WTC11 (cell line): ENCODE measurements at regions of chr6 and their contacts with region 1.

Region 1: DNA sequence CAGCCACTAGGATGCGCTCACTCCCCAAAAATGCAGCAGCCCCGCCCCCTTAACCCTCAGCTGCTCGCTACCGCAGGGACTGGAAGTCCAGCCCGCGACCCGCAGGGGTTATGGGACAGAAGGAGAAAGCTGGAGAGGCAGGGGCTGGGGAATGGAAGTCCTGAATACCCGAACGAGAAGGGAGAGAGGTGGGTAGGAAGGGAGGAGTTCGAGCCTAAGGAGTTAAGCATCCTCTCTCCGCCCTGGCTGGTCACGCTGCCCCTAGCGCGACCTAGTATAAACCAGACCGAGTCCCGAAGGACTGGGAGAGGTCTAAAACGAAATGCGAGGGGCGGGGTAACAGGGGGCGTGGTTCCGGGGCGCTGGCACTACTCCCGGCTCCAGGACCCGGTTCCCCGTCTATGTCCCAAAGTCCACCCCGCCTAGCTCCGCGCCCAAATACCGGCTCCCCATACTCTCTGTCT is 448 bp upstream of the DDAH2 start:
- DNase-seq: peak; percentile 95
- ATAC-seq: peak; percentile 78
- H3K4me3 Mint-ChIP-seq: peak overlapping the region; percentile 93
- H3K27ac Mint-ChIP-seq: peak overlapping the region; percentile 99
- H3K4me1 Mint-ChIP-seq: peaks cover 21% of the 10 kb centered on the region
- H3K27me3 Mint-ChIP-seq: no peaks in the 10 kb centered on the region
- CTCF ChIP-seq: no peak; the same call in 1 of the 2 replicates

Region 2: GRCh38 chr6:31660381-31661261 is 68.9 kb before region 1 on chr6 and contains the start of gene C6orf47:
- CTCF ChIA-PET with region 1: interaction called, 12 read pairs
- POLR2A ChIA-PET with region 1: interaction called, 4 read pairs
- DNase-seq: peak; percentile 89
- ATAC-seq: peak; percentile 83
- H3K4me3 Mint-ChIP-seq: peak within 1 kb of the TSS; percentile 89
- H3K27ac Mint-ChIP-seq: peak within 1 kb of the TSS; percentile 91
- H3K4me1 Mint-ChIP-seq: peaks cover 38% of the 10 kb centered on the region
- H3K27me3 Mint-ChIP-seq: no peaks in the 10 kb centered on the region
- CTCF ChIP-seq: no peak
- total RNA-seq, gene C6orf47: 14.0 to 16.3 TPM (median 14.3 TPM) in 3 replicates

Region 3: DNA sequence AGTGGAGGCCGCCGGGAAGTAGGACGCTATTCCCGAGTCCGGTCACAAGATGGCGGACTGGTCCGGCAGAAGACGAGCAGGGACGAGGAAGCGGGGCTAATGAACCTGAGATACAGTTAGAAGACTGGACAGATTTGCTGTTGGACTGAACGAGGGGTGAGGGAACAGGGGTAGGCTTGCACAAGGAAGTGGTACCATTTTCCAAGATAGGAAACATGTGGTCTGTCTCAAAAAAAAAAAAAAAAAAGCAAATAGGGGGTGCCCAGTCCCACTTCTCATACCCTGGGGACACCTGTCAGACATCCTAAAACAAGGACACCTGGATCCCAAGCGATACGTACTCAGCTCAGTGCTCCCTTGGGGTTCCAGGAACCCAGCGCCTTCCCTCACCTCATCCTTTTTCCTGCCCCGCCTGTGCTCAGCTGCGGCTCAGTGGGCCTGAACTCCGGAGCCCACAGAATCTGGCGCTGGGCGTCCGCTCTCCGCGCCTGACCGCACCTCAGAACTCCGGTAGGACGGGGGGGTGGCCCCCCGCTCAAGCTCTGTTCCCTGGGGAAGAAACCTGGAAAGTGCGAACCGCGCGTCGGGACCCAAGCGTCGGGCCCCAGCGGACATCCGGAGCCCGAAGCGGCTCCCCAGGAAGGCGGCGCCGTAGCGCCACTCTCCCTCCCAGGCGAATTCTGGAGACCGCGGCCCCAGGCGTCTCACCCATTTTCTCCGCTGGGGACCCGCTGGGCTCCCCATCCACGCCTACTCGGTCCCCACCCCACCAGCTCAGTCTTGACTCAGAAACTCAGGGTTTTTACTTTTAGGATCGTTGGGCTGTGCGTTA is 48.5 kb before region 1 on chr6 and contains the start of gene LY6G5C:
- CTCF ChIA-PET with region 1: interaction called, 16 read pairs
- POLR2A ChIA-PET with region 1: interaction called, 8 read pairs
- DNase-seq: peak; percentile 77
- ATAC-seq: peak; percentile 39
- H3K4me3 Mint-ChIP-seq: peak within 1 kb of the TSS; percentile 89
- H3K27ac Mint-ChIP-seq: no peak within 1 kb of the TSS
- H3K4me1 Mint-ChIP-seq: peaks cover 16% of the 10 kb centered on the region
- H3K27me3 Mint-ChIP-seq: peaks cover 24% of the 10 kb centered on the region
- CTCF ChIP-seq: peak; percentile 6; the same call in 1 of the 2 replicates
- total RNA-seq, gene LY6G5C: 0.98 to 1.6 TPM (median 1.0 TPM) in 3 replicates

Region 4: DNA sequence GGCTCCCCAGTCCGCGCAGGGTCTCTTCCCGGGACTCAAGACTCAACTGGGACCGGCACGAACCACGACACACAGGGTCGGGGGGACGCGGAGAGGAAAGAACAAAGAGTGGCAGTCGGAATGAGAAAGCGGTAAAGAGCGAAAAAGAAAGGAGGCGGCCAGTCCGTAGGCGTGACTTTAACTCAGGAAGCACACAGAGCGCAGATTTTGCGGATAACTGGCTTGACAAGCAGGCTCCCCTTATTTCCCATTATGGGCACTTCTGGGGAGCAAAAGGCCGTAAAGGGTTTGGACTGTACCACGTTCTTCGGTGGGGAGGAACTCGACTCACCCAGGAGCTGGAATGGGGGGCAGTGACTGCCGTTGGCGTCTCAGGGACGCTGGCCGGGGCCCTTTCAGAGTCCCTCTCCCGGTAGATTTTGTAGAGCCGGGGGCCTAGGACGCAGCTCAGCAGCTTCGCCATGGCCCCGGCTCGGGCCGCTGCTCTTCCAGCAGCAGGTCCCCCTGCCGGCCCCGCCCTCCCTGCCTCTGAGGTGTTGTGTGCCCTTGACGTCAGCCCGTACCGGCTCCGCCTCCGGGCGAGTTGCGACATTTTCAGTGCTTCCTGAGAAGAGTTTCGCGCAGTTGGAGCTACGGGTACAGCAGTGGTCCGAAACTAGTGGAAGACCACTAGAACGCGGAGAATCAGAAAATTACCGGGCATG is 26.6 kb before region 1 on chr6 and contains the start of gene ABHD16A:
- CTCF ChIA-PET with region 1: interaction called, 13 read pairs
- POLR2A ChIA-PET with region 1: no interaction called
- DNase-seq: peak; percentile 98
- ATAC-seq: peak; percentile 95
- H3K4me3 Mint-ChIP-seq: peak within 1 kb of the TSS; percentile 95
- H3K27ac Mint-ChIP-seq: peak within 1 kb of the TSS; percentile 99
- H3K4me1 Mint-ChIP-seq: peaks cover 12% of the 10 kb centered on the region
- H3K27me3 Mint-ChIP-seq: peaks cover 7% of the 10 kb centered on the region; the same call in 1 of the 2 replicates
- CTCF ChIP-seq: no peak
- total RNA-seq, gene ABHD16A: 28.6 to 30.3 TPM (median 29.8 TPM) in 3 replicates

Region 5: GRCh38 chr6:31713991-31714684 is 15.4 kb before region 1 on chr6:
- CTCF ChIA-PET with region 1: interaction called, 24 read pairs
- POLR2A ChIA-PET with region 1: interaction called, 4 read pairs
- DNase-seq: no peak
- ATAC-seq: peak; percentile 39
- H3K4me3 Mint-ChIP-seq: no peak overlapping the region
- H3K27ac Mint-ChIP-seq: no peak overlapping the region
- H3K4me1 Mint-ChIP-seq: peaks cover 46% of the 10 kb centered on the region
- H3K27me3 Mint-ChIP-seq: no peaks in the 10 kb centered on the region; the same call in 1 of the 2 replicates
- CTCF ChIP-seq: no peak

Region 6: DNA sequence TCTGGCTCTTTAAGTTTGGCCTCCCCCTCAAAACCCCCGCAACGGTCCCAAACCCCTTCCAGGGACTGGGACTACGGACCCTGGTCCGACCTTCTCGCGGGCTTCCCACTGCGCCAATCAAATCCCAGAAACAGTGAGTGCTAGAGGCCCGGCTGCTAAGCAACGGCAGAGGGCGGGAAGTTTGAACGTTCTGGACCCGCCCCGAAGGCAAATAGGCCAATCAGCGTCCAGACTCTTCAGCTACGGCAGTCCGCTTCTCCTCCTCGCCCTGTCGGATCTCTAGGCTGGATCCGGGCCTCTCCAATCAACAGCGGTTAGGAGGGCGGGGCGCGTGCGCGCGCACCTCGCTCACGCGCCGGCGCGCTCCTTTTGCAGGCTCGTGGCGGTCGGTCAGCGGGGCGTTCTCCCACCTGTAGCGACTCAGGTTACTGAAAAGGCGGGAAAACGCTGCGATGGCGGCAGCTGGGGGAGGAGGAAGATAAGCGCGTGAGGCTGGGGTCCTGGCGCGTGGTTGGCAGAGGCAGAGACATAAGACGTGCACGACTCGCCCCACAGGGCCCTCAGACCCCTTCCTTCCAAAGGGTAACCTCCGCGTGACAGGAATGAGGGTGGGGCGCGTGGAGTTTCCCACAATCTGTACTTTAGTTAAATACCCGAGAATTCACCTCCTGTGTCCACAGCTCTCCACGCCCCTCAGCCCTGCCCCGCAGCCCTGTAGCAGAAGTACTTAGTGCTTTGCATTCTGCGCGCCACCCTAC is 10.3 kb after region 1 on chr6 and contains the start of gene MSH5:
- CTCF ChIA-PET with region 1: interaction called, 11 read pairs
- POLR2A ChIA-PET with region 1: interaction called, 32 read pairs
- DNase-seq: peak; percentile 98
- ATAC-seq: peak; percentile 89
- H3K4me3 Mint-ChIP-seq: peak within 1 kb of the TSS; percentile 80
- H3K27ac Mint-ChIP-seq: peak within 1 kb of the TSS; percentile 85
- H3K4me1 Mint-ChIP-seq: peaks cover 42% of the 10 kb centered on the region
- H3K27me3 Mint-ChIP-seq: no peaks in the 10 kb centered on the region; the same call in 1 of the 2 replicates
- CTCF ChIP-seq: no peak
- total RNA-seq, gene MSH5: 43.1 to 62.3 TPM (median 56.1 TPM) in 3 replicates

Region 7: DNA sequence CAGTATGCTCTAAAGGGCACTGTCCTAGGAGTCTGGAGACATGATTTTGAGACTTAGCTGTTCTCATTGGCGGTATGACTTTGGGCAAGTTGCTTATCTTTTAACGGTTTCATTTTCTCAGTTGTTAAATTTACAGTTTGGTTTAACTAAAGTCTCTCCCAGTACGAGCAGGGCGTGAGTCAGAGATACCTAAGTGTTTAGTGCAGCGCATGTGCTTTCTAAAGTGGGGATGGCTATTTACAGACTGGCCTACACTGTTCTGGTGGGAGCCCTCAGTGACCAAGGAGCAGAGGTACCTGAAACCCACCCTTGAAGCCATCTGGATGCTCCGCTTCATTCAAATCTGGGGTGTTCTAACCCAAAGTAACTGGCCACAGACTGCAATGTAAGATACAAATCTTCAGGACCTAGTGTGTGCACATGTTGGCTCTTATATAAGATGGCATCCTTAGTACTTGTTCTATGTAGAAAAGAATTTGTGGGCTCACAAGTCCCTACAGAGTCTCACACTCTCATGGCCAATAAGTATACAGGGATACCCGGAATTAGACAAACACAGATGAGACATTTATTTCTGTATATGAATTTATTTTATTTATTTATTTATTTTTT is 21.0 kb after region 1 on chr6:
- CTCF ChIA-PET with region 1: no interaction called
- POLR2A ChIA-PET with region 1: no interaction called
- DNase-seq: no peak
- ATAC-seq: no peak
- H3K4me3 Mint-ChIP-seq: no peak overlapping the region
- H3K27ac Mint-ChIP-seq: no peak overlapping the region
- H3K4me1 Mint-ChIP-seq: no peaks in the 10 kb centered on the region
- H3K27me3 Mint-ChIP-seq: no peaks in the 10 kb centered on the region; the same call in 1 of the 2 replicates
- CTCF ChIP-seq: no peak